Calu3 (cell line): ENCODE measurements at regions of chr16 and their contacts with region 1.

Region 1: GRCh38 chr16:23182460-23183309 is at the start of gene SCNN1G:
- DNase-seq: peak; percentile 99
- H3K4me3 Mint-ChIP-seq: peak within 1 kb of the TSS; percentile 41
- H3K27ac Mint-ChIP-seq: no peak within 1 kb of the TSS
- H3K4me1 Mint-ChIP-seq: peaks cover 10% of the 10 kb centered on the region
- H3K27me3 Mint-ChIP-seq: peaks cover 86% of the 10 kb centered on the region
- CTCF ChIP-seq: peak; percentile 98
- total RNA-seq, gene SCNN1G: not detected in 2 replicates

Region 2: GRCh38 chr16:23374731-23375510 is 192.2 kb after region 1 on chr16:
- CTCF ChIA-PET with region 1: interaction called, 3 read pairs
- intact Hi-C with region 1: loop called (anchors 5 kb)
- DNase-seq: peak; percentile 60
- H3K4me3 Mint-ChIP-seq: no peak overlapping the region
- H3K27ac Mint-ChIP-seq: no peak overlapping the region
- H3K4me1 Mint-ChIP-seq: peaks cover 8% of the 10 kb centered on the region
- H3K27me3 Mint-ChIP-seq: peaks cover 77% of the 10 kb centered on the region
- CTCF ChIP-seq: no peak

Region 3: GRCh38 chr16:23504451-23505179 is 321.9 kb after region 1 on chr16:
- CTCF ChIA-PET with region 1: no interaction called
- intact Hi-C with region 1: loop called (anchors 10 kb)
- DNase-seq: peak; percentile 72
- H3K4me3 Mint-ChIP-seq: no peak overlapping the region
- H3K27ac Mint-ChIP-seq: no peak overlapping the region
- H3K4me1 Mint-ChIP-seq: peaks cover 42% of the 10 kb centered on the region
- H3K27me3 Mint-ChIP-seq: no peaks in the 10 kb centered on the region
- CTCF ChIP-seq: no peak